GM10248 (cell line): ENCODE measurements at regions of chr12 and their contacts with region 1.

Region 1: GRCh38 chr12:79069009-79069408 is 204.4 kb downstream of the SYT1 start:
- DNase-seq: peak; percentile 26
- CTCF ChIP-seq: no peak

Region 2: DNA sequence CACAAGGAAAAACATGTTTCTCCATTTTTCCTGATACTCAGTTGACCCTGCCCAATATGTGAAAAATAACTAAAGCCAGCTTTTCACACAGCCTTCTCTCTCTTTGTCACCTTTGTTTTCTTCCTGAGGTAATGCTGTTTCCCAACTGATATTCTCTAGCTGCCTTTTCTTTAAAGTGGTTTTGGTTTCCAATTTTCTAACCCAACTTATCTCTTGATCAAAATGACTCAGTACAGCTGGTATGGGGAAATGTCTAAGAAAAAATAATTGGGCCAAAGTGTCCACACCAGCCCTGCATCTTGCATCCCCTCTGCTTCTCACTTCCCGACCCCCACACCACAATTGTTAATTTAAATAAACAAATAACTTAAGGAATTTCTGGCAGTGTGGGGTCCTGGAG is 10.7 kb before region 1 on chr12:
- CTCF ChIA-PET with region 1: interaction called, 10 read pairs
- POLR2A ChIA-PET with region 1: no interaction called
- DNase-seq: no peak
- CTCF ChIP-seq: no peak